OCI-LY7 (cell line): ENCODE measurements at regions of chr21 and their contacts with region 1.

Region 1: DNA sequence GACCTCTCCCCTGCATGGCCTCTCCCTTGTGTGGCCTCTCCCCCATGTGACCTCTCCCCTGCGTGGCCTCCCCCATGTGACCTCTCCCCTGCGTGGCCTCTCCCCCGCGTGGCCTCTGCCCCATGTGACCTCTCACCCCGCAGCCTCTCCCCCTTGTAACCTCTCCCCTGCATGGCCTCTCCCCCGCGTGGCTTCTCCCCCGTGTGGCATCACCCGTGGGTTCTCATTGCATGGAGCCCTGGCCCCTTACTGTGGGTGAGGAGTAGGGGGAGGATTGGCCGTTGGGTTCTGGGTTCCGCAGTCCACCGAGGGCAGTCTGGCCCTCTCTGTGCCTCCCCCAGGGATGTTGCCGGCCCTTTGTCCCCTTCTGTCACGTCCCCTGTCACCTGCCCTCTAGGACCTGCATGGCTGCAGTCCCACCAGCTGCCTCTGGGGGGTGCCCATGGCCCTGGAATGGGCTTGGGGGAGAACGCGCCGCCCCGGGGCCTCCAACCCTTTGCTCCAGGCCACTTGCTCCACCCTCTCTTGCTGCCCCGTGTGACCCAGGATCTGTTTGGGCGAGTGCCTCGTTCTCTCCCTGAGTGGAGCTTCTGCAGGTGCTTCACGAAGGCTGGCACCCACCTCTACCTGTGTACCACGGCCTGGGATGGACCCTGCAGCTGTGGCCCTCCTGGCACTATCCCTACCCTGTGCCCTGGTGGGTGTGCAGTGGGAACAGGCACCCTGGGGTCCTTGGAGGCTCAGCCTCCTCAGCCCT is 21.3 kb downstream of the RRP1 start:
- DNase-seq: peak; percentile 83
- H3K4me3 ChIP-seq: no peak overlapping the region
- H3K27ac ChIP-seq: no peak overlapping the region
- H3K4me1 ChIP-seq: peaks cover 52% of the 10 kb centered on the region
- CTCF ChIP-seq: peak; percentile 94

Region 2: DNA sequence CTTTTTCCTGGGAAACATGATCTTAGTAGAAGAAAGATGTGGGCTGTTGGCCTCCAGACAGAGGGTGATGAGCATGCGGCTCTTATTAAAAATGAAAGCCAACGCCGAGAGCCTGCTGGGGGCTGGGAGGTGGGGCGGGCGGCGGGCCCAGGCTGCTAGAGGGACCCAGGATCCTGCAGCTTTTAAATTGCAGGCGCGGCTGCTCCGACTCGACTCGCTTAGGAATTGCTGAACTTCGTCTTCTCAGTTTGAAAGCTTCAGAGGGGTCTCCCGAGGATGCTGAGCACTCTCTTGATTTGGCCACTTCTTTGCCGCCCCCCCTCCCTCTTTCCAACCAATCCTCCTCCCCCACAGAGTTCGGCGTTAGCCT is 55.6 kb after region 1 on chr21:
- CTCF ChIA-PET with region 1: no interaction called
- POLR2A ChIA-PET with region 1: no interaction called
- intact Hi-C with region 1: loop called (anchors 2 kb)
- DNase-seq: peak; percentile 47
- H3K4me3 ChIP-seq: peak overlapping the region; percentile 72
- H3K27ac ChIP-seq: peak overlapping the region; percentile 15
- H3K4me1 ChIP-seq: peaks cover 50% of the 10 kb centered on the region
- CTCF ChIP-seq: no peak

Region 3: GRCh38 chr21:43938751-43939442 is 128.2 kb after region 1 on chr21:
- CTCF ChIA-PET with region 1: no interaction called
- POLR2A ChIA-PET with region 1: no interaction called
- intact Hi-C with region 1: loop called (anchors 1 kb)
- DNase-seq: peak; percentile 92
- H3K4me3 ChIP-seq: peak overlapping the region; percentile 66
- H3K27ac ChIP-seq: no peak overlapping the region
- H3K4me1 ChIP-seq: peaks cover 10% of the 10 kb centered on the region
- CTCF ChIP-seq: peak; percentile 99

Region 4: DNA sequence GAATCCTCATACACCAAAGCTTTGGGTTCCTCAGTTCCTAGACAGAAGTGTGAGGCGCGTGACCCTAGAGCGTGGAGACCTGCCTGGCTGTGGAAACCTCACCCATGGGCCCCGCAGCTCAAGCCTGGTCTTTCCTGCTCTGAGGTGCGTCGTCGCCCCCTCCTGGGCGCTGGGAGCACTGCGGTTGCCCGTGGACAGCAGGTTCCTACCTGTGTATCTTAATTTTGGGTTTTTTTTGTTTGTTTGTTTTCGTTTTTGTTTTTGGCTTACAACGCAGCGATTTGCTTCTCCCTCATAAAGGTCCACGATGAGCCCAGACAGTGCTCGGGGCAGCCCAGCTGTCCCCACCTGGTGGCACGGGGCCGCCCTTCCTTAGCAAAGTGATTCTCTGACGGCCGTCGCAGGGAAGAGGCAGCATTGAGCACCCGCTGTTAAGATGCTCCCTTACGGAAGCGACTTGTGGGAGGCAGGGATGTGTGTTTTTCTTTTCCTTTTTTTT is 164.9 kb after region 1 on chr21:
- CTCF ChIA-PET with region 1: no interaction called
- POLR2A ChIA-PET with region 1: no interaction called
- intact Hi-C with region 1: loop called (anchors 1 kb)
- DNase-seq: peak; percentile 71
- H3K4me3 ChIP-seq: no peak overlapping the region
- H3K27ac ChIP-seq: no peak overlapping the region
- H3K4me1 ChIP-seq: no peaks in the 10 kb centered on the region
- CTCF ChIP-seq: peak; percentile 96